CD4-positive, alpha-beta memory T cell (primary cell): ENCODE measurements at regions of chr3 and their contacts with region 1.

Region 1: DNA sequence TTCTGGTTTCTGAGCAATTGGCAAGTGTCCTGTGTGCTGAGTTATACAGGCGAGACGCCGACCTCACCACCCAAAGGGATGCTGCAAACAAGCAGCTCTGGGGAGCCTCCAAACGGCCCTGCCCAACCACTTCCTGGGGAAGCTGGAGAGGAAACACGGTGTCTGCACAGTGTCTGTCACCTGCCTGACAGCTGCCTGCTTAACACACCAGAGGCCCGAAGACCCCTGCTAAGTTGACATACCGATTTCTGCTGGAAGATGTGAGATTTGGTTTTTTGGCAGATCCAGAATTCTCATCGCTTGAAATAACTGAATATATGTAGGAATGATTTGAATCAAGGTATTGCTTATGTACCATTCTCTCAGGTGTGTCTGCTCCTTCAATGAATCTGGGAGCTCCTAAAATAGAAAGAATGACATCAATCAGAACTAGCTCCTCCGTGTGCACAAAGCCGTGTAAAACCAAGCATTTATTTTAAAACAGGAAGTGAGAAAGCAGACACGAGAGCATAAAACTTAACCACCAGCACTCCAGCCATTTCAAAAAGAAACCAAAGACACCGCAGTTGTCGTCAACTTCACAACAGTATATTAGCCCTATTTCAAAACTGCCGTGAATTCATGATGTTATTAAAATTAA is 27.2 kb downstream of the LRRC2 start:
- DNase-seq: peak; percentile 83 to 95 (median 86)
- H3K4me3 ChIP-seq: peak overlapping the region; percentile 5 to 42
- H3K4me3 Mint-ChIP-seq: peak overlapping the region; percentile 65 to 85 (median 78)
- H3K27ac ChIP-seq: peak overlapping the region; percentile 51
- H3K27ac Mint-ChIP-seq: peak overlapping the region; percentile 88 to 97 (median 96)
- H3K4me1 ChIP-seq: peaks cover 52% of the 10 kb centered on the region
- H3K4me1 Mint-ChIP-seq: peaks cover 29 to 60% (median 46%) of the 10 kb centered on the region in 4 donors
- H3K27me3 ChIP-seq: no peaks in the 10 kb centered on the region
- H3K27me3 Mint-ChIP-seq: no peaks in the 10 kb centered on the region

Region 2: GRCh38 chr3:46236294-46237054 is 302.4 kb before region 1 on chr3:
- CTCF ChIA-PET with region 1: no interaction called
- POLR2A ChIA-PET with region 1: no interaction called
- intact Hi-C with region 1: no loop called
- DNase-seq: no peak
- H3K4me3 ChIP-seq: no peak overlapping the region
- H3K4me3 Mint-ChIP-seq: no peak overlapping the region
- H3K27ac ChIP-seq: no peak overlapping the region
- H3K27ac Mint-ChIP-seq: no peak overlapping the region
- H3K4me1 ChIP-seq: no peaks in the 10 kb centered on the region
- H3K4me1 Mint-ChIP-seq: peaks cover 0 to 4% (median 0%) of the 10 kb centered on the region in 4 donors
- H3K27me3 ChIP-seq: no peaks in the 10 kb centered on the region
- H3K27me3 Mint-ChIP-seq: peaks cover 0 to 2% of the 10 kb centered on the region in 2 donors

Region 3: GRCh38 chr3:46520531-46520930 is 18.4 kb before region 1 on chr3:
- CTCF ChIA-PET with region 1: interaction called, 3 read pairs
- POLR2A ChIA-PET with region 1: interaction called, 4 read pairs
- intact Hi-C with region 1: loop called (anchors 2 kb)
- DNase-seq: no peak
- H3K4me3 ChIP-seq: no peak overlapping the region
- H3K4me3 Mint-ChIP-seq: no peak overlapping the region
- H3K27ac ChIP-seq: no peak overlapping the region
- H3K27ac Mint-ChIP-seq: no peak overlapping the region
- H3K4me1 ChIP-seq: no peaks in the 10 kb centered on the region
- H3K4me1 Mint-ChIP-seq: peaks cover 0 to 5% (median under 1%) of the 10 kb centered on the region in 4 donors
- H3K27me3 ChIP-seq: no peaks in the 10 kb centered on the region
- H3K27me3 Mint-ChIP-seq: peaks cover 0 to 1% of the 10 kb centered on the region in 2 donors

Region 4: GRCh38 chr3:46549408-46549904 is 10.5 kb after region 1 on chr3:
- CTCF ChIA-PET with region 1: interaction called, 9 read pairs
- POLR2A ChIA-PET with region 1: interaction called, 12 read pairs
- intact Hi-C with region 1: no loop called
- DNase-seq: no peak
- H3K4me3 ChIP-seq: no peak overlapping the region
- H3K4me3 Mint-ChIP-seq: no peak overlapping the region
- H3K27ac ChIP-seq: no peak overlapping the region
- H3K27ac Mint-ChIP-seq: peak overlapping the region in 1 of 7 donors; percentile 82
- H3K4me1 ChIP-seq: peaks cover 9% of the 10 kb centered on the region
- H3K4me1 Mint-ChIP-seq: peaks cover 7 to 14% (median 9%) of the 10 kb centered on the region in 4 donors
- H3K27me3 ChIP-seq: no peaks in the 10 kb centered on the region
- H3K27me3 Mint-ChIP-seq: peaks cover 0 to 5% of the 10 kb centered on the region in 2 donors

Region 5: GRCh38 chr3:46558184-46559043 is 19.5 kb after region 1 on chr3:
- CTCF ChIA-PET with region 1: interaction called, 34 read pairs
- POLR2A ChIA-PET with region 1: interaction called, 25 read pairs
- intact Hi-C with region 1: loop called (anchors 1 kb)
- DNase-seq: peak; percentile 68 to 74 (median 73)
- H3K4me3 ChIP-seq: peak overlapping the region in 1 of 2 donors; percentile 25
- H3K4me3 Mint-ChIP-seq: peak overlapping the region; percentile 76 to 87 (median 82)
- H3K27ac ChIP-seq: no peak overlapping the region
- H3K27ac Mint-ChIP-seq: peak overlapping the region in 6 of 7 donors; percentile 13 to 71 (median 36)
- H3K4me1 ChIP-seq: peaks cover 14% of the 10 kb centered on the region
- H3K4me1 Mint-ChIP-seq: peaks cover 10 to 17% (median 15%) of the 10 kb centered on the region in 4 donors
- H3K27me3 ChIP-seq: no peaks in the 10 kb centered on the region
- H3K27me3 Mint-ChIP-seq: peaks cover 1 to 4% of the 10 kb centered on the region in 2 donors